HepG2 (cell line): ENCODE measurements at regions of chr17 and their contacts with region 1.

Region 1: DNA sequence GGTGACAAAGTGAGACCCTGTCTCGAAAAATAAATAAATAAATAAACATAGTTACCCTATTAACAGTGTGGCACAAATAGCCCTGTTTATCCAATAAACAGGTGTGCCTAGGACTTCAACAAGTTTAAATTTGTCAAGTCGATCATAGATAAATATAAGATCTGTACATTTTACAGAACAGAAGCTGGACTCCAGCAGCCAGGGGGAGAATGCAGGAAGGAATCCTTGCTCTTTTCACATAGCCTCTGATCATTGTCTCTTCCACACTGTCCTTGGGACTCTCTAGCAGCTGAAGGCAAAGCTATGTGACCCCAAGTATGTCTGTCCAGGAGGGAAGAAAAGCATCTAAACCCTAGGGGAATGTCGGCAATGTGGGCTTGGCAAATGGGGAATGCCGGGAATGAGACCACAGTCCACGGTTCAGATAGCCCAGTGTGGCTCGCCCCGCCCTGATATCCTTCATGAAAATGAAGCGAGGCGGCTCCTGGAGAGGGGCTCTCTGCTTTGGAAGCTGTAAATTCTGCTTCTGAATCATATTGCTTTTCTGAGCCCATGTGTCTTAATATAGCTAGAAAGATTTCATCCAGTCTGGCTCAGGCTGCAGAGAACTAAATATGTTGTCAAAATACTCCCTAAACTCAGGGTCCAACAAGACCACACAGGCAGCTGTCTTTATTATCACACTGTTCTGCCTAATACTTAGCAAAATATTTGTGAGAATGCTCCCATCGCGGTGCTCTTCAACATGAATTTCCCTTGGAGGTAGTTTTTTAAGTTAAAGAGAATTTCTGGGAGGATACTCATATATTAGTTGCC is 24.9 kb upstream of the GRB2 start:
- DNase-seq: peak; percentile 90
- ATAC-seq: peak; percentile 89
- H3K4me3 ChIP-seq: peak overlapping the region; percentile 49 to 62 (median 50)
- H3K27ac ChIP-seq: peak overlapping the region; percentile 61
- H3K4me1 ChIP-seq: peaks cover 80% of the 10 kb centered on the region
- H3K27me3 ChIP-seq: no peaks in the 10 kb centered on the region
- CTCF ChIP-seq: peak; percentile 30; the same call in 1 of the 2 replicates
- EP300 ChIP-seq: peak; percentile 66 to 81; a peak in 3 of 4 replicates
- POLR2A ChIP-seq: peak; percentile 60 to 67; a peak in 3 of 4 replicates
- RAD21 ChIP-seq: 0 out of 2 replicates have a peak, but pooled peaks have one; percentile 32

Region 2: GRCh38 chr17:75271233-75271954 is 159.0 kb before region 1 on chr17:
- CTCF ChIA-PET with region 1: no interaction called
- POLR2A ChIA-PET with region 1: interaction called, 18 read pairs
- in situ Hi-C with region 1: no loop called
- intact Hi-C with region 1: no loop called
- DNase-seq: peak; percentile 58
- ATAC-seq: peak; percentile 36
- H3K4me3 ChIP-seq: peak overlapping the region; percentile 91 to 98 (median 94)
- H3K27ac ChIP-seq: peak overlapping the region; percentile 77
- H3K4me1 ChIP-seq: peaks cover 43% of the 10 kb centered on the region
- H3K27me3 ChIP-seq: no peaks in the 10 kb centered on the region
- CTCF ChIP-seq: peak; percentile 70
- EP300 ChIP-seq: no peak
- POLR2A ChIP-seq: peak in 1 of 2 experiments; percentile 71; a peak in 2 of 4 replicates
- RAD21 ChIP-seq: peak; percentile 87

Region 3: DNA sequence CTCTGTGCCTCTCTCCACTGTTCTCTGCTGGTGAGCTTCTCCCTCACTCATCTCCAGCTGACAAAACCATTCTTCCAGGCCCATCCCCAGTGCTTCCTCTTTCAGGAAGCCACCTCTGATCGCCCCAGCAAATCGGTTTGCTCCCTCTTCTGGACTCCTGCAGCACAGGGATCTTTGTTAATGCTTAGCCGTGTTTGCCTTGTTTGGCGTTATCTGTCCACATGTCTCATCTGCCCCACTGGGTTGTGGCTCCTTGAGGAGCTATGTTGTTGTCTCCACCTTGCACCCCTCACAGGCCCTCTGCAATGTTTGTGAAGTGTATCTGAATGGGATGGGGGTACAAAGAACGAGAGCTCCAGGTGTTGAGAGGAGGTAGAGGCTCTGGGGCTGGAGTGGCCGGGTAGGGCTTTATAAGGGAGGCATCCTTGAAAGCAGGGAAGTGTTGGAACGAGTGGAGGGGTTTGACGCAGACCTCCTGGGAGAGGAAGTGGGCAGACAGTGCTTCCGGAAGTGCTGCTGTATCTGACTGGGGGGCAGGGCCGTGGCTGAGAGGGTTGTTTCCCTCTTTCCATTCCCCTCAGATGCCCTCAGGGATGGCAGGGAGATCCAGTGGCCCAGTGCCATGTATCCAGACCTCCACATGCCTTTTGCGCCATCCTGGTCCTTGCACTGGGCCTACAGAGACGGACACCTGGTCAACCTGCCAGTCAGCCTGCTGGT is 57.1 kb after region 1 on chr17:
- CTCF ChIA-PET with region 1: interaction called, 4 read pairs
- POLR2A ChIA-PET with region 1: no interaction called
- in situ Hi-C with region 1: loop called (anchors 5 kb)
- intact Hi-C with region 1: loop called (anchors 5 kb)
- DNase-seq: no peak
- ATAC-seq: peak; percentile 13; the same call in 2 of the 3 replicates
- H3K4me3 ChIP-seq: no peak overlapping the region
- H3K27ac ChIP-seq: no peak overlapping the region
- H3K4me1 ChIP-seq: no peaks in the 10 kb centered on the region
- H3K27me3 ChIP-seq: no peaks in the 10 kb centered on the region
- CTCF ChIP-seq: peak; percentile 36
- EP300 ChIP-seq: no peak
- POLR2A ChIP-seq: no peak
- RAD21 ChIP-seq: no peak; the same call in 1 of the 2 replicates

Region 4: DNA sequence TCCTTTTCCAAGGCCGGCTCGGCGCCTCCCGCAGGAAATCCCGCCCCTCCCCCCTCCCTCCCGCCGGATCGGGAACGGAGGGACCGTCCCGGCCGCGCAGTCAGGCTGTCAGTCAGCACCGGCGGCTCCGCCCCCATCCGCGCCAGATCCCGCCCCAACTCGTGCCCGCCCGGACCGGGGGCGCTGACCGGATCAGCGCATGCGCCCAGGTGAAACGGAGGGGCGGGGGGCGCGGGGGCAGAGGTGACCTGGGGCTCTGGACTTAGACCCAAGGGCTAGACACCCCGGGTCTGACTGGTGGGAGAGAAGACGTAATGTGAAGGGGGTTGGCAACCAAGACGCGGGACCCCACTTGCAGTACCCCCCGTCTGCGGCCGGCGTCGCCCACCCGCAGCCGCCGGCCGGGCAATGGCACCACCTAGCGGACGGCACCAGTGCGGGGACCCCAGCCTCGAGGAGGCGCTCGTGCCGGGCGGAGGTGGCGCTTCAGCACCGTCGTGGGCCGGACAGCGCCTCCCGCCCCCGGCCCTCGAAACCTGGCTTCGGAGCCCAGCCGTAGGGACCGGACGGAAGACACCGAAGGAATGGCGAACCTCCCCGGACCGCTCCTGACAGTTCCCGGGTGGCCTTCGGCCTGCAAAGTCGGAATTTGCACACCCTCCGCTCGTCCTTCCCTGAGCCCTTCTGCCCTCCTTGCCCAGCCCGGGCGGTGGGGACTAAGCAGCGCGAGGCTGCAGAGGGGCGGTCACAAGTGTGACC is 85.3 kb after region 1 on chr17 and contains the start of gene CASKIN2:
- CTCF ChIA-PET with region 1: interaction called, 11 read pairs
- POLR2A ChIA-PET with region 1: interaction called, 10 read pairs
- in situ Hi-C with region 1: no loop called
- intact Hi-C with region 1: loop called (anchors 1 kb)
- DNase-seq: peak; percentile 86
- ATAC-seq: peak; percentile 65
- H3K4me3 ChIP-seq: peak within 1 kb of the TSS; percentile 68 to 93 (median 79)
- H3K27ac ChIP-seq: peak within 1 kb of the TSS; percentile 51
- H3K4me1 ChIP-seq: peaks cover 53% of the 10 kb centered on the region
- H3K27me3 ChIP-seq: no peaks in the 10 kb centered on the region; a peak in 1 of 5 replicates
- CTCF ChIP-seq: peak; percentile 98
- EP300 ChIP-seq: 0 out of 4 replicates have a peak, but pooled peaks of 1 of the 2 experiments have one; percentile 4
- POLR2A ChIP-seq: no peak
- RAD21 ChIP-seq: peak; percentile 99
- total RNA-seq, gene CASKIN2: 5.2 and 10.6 TPM in 2 replicates

Region 5: DNA sequence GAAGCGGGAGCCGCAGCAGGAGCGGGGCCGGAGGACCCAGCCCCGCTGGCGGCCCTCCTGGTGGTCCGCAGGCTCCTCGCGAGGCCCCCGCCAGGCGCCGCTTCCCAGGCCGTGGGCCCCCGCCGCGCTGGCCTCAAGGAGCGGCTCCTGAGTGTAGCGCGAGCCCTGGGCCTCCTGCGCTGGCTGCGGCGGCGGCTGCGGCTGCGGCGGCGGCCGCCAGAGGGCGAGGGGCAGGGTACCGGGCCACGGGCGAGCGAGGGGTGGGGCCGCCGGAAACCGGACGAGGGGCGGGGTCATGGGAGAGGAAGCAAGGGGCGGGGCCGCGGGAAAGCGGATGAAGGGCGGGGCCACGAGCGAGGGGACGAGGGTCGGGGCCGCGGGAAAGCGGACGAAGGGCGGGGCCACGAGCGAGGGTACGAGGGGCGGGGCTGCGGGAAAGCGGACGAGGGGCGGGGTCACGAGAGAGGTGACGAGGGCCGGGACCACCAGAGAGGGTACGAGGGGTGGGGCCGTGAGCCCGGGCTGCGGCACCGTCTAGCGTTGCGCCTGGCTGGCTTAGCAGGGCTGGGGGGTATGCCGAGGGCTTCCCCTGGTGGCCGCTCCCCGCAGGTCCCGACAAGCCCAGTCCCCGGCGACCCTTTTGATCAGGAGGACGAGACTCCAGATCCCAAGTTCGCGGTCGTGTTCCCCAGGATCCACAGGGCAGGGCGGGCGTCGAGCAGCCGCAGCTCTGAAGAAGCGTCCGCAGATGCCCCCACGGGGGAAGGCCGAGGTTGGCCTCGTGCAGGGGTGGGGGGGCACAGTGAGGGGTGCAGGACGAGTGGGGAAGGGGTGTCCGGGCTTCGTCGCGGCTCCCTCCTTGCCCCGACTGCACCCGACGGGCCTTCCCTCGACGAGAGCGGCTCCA is 158.9 kb after region 1 on chr17:
- CTCF ChIA-PET with region 1: no interaction called
- POLR2A ChIA-PET with region 1: no interaction called
- in situ Hi-C with region 1: loop called (anchors 10 kb)
- intact Hi-C with region 1: no loop called
- DNase-seq: peak; percentile 78
- ATAC-seq: peak; percentile 79
- H3K4me3 ChIP-seq: peak overlapping the region; percentile 36 to 75 (median 72); a peak in 5 of 6 replicates
- H3K27ac ChIP-seq: no peak overlapping the region
- H3K4me1 ChIP-seq: peaks cover 40% of the 10 kb centered on the region
- H3K27me3 ChIP-seq: peaks cover 7 to 15% of the 10 kb centered on the region in 2 experiments; a peak in 4 of 5 replicates
- CTCF ChIP-seq: peak; percentile 69
- EP300 ChIP-seq: 0 out of 4 replicates have a peak, but pooled peaks of 1 of the 2 experiments have one; percentile 8
- POLR2A ChIP-seq: peak in 1 of 2 experiments; percentile 72; a peak in 1 of 4 replicates
- RAD21 ChIP-seq: peak; percentile 81